ENCODE measurements at regions of chr16 and their contacts with region 1.

Region 1: GRCh38 chr16:74064120-74064735 is 232.4 kb upstream of the PSMD7 start:
- DNase-seq: no peak
- H3K4me3 ChIP-seq: no peak overlapping the region
- H3K27ac ChIP-seq: no peak overlapping the region
- H3K4me1 ChIP-seq: no peaks in the 10 kb centered on the region
- H3K27me3 ChIP-seq: no peaks in the 10 kb centered on the region
- CTCF ChIP-seq: no peak
- EP300 ChIP-seq: no peak
- POLR2A ChIP-seq: no peak

Region 2: DNA sequence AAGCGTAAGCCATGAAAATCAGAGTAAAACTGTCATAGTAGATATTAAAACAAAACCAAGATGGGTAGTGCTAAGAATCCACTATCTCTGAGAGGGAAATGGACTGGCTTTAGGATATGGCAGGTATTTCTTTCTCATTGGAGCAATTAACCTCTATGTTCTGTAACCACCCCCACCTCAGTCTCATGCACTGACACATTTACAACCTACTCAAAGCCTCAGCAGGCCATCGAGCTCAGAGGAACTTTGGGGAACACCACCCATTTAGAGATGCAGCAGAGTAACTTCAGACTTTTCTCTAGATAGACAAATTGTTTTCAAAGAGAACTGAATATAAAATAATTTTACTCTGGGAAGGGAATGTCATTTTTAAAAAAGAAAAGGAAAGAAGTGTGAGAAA is 400.5 kb before region 1 on chr16:
- in situ Hi-C with region 1: no loop called
- intact Hi-C with region 1: no loop called
- DNase-seq: no peak
- H3K4me3 ChIP-seq: no peak overlapping the region
- H3K27ac ChIP-seq: no peak overlapping the region
- H3K4me1 ChIP-seq: no peaks in the 10 kb centered on the region
- H3K27me3 ChIP-seq: no peaks in the 10 kb centered on the region
- CTCF ChIP-seq: no peak
- EP300 ChIP-seq: no peak
- POLR2A ChIP-seq: no peak

Region 3: DNA sequence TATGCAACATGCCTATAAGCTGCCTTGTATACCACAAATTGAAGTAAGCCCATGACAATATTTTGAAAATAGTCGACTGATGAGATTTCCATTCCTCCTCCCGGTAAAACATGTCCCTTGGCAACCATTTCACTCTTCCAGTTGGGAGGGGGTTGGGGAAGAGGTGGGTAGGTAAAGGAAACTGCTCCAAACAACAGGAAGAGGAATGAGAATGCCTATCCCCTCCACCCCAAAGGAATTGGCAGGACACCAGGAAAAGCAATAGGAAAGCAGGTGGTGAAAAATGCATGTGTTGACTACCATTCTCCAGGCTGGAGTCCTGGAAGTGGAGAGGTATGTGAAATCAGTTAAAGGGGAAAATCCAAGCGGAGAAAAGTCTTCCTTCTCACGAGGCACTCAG is 223.5 kb before region 1 on chr16:
- in situ Hi-C with region 1: no loop called
- intact Hi-C with region 1: loop called (anchors 5 kb)
- DNase-seq: no peak
- H3K4me3 ChIP-seq: no peak overlapping the region
- H3K27ac ChIP-seq: no peak overlapping the region
- H3K4me1 ChIP-seq: no peaks in the 10 kb centered on the region
- H3K27me3 ChIP-seq: no peaks in the 10 kb centered on the region
- CTCF ChIP-seq: no peak
- EP300 ChIP-seq: no peak
- POLR2A ChIP-seq: no peak

Region 4: DNA sequence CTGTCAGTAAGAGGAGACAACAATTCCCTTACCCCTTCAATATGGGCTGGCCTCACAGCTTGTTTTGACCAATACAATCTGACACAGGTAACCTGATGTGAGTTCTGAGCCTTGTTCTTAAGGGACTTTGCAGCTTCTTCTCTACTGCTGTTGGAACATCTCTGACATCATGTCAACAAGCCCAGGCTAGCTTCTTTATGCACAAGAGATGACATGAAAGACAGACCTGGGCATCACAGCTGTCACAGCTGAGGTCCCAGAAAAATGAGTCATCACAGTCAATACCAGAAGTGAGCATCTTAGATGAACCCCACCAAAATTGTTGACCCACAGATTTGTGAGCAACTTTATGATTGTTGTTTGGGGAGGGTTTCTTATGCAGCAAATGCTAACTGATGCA is 199.4 kb before region 1 on chr16:
- in situ Hi-C with region 1: no loop called
- intact Hi-C with region 1: no loop called
- DNase-seq: no peak
- H3K4me3 ChIP-seq: no peak overlapping the region
- H3K27ac ChIP-seq: no peak overlapping the region
- H3K4me1 ChIP-seq: no peaks in the 10 kb centered on the region
- H3K27me3 ChIP-seq: no peaks in the 10 kb centered on the region
- CTCF ChIP-seq: no peak
- EP300 ChIP-seq: no peak
- POLR2A ChIP-seq: no peak

Region 5: GRCh38 chr16:74226338-74226954 is 162.2 kb after region 1 on chr16:
- in situ Hi-C with region 1: loop called in 1 of 4 experiments (anchors 25 kb)
- intact Hi-C with region 1: no loop called
- DNase-seq: no peak
- H3K4me3 ChIP-seq: no peak overlapping the region
- H3K27ac ChIP-seq: no peak overlapping the region
- H3K4me1 ChIP-seq: no peaks in the 10 kb centered on the region
- H3K27me3 ChIP-seq: no peaks in the 10 kb centered on the region
- CTCF ChIP-seq: peak; percentile 18 to 37 (median 27)
- EP300 ChIP-seq: no peak
- POLR2A ChIP-seq: no peak

Measured in transverse colon (tissue), 4 donors.